ENCODE measurements at regions of chrX and their contacts with region 1.

Region 1: DNA sequence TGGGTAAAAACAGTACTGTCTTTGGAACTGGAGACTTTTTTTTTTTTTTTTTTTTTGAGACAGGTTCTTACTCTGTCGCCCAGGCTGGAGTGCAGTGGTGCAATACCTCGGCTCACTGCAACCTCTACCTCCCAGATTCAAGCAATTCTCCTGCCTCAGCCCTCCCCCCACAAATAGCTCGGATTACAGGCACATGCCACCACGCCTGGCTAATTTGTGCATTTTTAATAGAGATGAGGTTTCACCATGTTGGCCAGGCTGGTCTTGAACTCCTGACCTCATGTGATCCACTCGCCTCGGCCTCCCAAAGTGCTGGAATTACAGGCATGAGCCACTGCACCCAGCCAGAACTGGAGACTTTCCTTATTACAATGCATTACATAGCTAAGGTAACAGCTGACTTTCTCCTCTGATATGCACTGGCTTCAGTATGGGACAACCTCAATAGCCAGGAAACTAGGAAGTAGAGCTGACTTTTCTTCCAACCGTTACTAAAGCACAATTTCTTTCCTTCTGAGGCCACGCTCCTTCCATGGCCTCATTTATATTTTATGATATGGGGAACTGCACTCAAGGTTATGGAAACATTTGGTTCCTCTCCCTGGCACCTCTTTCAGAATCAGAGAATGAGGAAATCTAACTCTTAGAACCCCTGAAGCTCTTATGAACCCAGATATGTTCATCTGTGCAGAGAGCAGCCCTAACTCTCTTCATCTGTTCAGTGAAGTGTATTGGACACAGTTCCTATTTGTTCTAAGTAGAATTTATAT is 53.5 kb upstream of the FAM9B start:
- DNase-seq: no peak
- ATAC-seq: no peak
- H3K4me3 ChIP-seq: no peak overlapping the region
- H3K27ac ChIP-seq: no peak overlapping the region
- H3K4me1 ChIP-seq: no peaks in the 10 kb centered on the region
- H3K27me3 ChIP-seq: no peaks in the 10 kb centered on the region
- CTCF ChIP-seq: no peak
- EP300 ChIP-seq: no peak
- POLR2A ChIP-seq: no peak
- RAD21 ChIP-seq: no peak

Region 2: DNA sequence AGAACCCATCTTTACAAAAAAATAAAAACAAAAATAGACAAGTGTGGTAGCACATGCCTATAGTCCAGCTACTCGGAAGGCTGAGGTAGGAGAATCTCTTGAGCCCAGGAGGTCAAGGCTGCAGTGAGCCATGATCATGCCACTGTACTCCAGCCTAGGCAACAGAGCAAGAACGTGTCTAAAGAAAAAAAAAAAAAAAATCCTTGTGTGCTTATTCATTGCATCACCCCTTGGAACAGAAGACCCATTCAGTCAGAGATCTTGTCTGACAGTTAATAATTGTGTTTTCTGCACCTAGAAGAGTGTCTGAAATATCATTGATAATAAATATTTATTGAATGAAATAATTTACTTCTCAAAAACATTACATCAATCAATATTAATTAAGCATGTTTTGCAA is 280.0 kb after region 1 on chrX:
- CTCF ChIA-PET with region 1: no interaction called
- POLR2A ChIA-PET with region 1: interaction called, 16 read pairs
- RAD21 ChIA-PET with region 1: no interaction called
- SMC1A ChIA-PET with region 1: no interaction called
- in situ Hi-C with region 1: no loop called
- intact Hi-C with region 1: no loop called
- DNase-seq: no peak
- ATAC-seq: no peak
- H3K4me3 ChIP-seq: no peak overlapping the region
- H3K27ac ChIP-seq: no peak overlapping the region
- H3K4me1 ChIP-seq: no peaks in the 10 kb centered on the region
- H3K27me3 ChIP-seq: no peaks in the 10 kb centered on the region
- CTCF ChIP-seq: no peak
- EP300 ChIP-seq: no peak
- POLR2A ChIP-seq: no peak
- RAD21 ChIP-seq: no peak